AG04449 (cell line): ENCODE measurements at regions of chr10 and their contacts with region 1.

Region 1: DNA sequence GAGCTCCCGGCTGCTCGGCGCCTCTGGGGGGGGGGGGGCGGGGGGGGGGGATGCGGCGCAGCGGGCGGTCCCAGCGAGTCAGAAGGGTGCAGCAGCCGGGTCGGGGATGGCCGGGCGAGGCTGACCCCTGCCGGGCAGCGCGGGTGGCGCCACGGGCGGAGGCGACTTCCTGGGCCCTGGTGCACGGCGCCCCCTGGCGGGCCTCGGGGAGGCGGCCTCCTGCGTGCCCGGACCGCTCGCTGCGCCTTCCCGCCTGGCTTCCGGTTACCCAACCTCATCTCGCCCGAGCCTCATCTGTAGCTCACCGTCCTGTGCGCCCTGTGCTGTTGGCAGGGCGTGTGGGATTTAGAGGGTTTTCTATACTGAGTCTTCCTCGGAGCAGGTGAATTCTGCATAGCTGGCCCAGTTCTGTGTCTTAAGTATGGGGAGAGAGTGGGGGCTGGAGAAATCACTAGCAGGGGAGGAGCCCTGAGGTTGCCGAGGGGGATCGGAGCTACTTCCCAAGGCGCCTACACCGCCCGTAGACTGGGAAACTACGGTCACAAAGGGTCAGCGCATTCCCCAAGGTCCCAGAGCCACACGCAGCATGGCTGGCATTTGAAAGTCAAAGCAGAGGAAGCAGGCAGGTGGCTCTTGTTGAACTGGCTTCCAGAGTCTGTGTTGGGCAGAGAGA is 28.3 kb upstream of the WDFY4 start:
- DNase-seq: no peak
- H3K4me3 ChIP-seq: peak overlapping the region; percentile 62
- CTCF ChIP-seq: peak; percentile 100

Region 2: GRCh38 chr10:48279081-48279751 is 377.2 kb before region 1 on chr10:
- CTCF ChIA-PET with region 1: no interaction called
- POLR2A ChIA-PET with region 1: no interaction called
- DNase-seq: no peak
- H3K4me3 ChIP-seq: no peak overlapping the region
- CTCF ChIP-seq: no peak

Region 3: DNA sequence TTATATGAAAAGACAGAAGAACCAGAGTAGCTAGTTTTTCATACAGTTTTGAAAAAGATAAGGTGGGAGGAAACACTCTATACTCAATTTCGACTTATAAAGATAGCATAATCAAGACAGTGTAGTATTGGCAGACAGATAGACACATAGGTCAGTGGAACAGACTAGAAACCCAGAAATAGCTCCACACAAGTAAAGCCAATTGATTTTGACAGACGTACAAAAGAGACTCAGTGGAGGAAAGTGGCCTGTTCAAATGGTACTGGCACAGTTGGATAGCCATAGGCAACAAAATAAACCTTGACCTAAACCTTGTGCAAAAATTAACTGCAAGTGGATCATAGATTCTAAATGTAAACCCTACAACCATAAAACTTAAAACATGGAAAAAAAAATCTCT is 303.1 kb before region 1 on chr10:
- CTCF ChIA-PET with region 1: interaction called, 20 read pairs
- POLR2A ChIA-PET with region 1: no interaction called
- DNase-seq: no peak
- H3K4me3 ChIP-seq: no peak overlapping the region
- CTCF ChIP-seq: no peak

Region 4: GRCh38 chr10:48444266-48444665 is 212.1 kb before region 1 on chr10:
- CTCF ChIA-PET with region 1: interaction called, 15 read pairs
- POLR2A ChIA-PET with region 1: no interaction called
- DNase-seq: no peak
- H3K4me3 ChIP-seq: no peak overlapping the region
- CTCF ChIP-seq: peak; percentile 26

Region 5: DNA sequence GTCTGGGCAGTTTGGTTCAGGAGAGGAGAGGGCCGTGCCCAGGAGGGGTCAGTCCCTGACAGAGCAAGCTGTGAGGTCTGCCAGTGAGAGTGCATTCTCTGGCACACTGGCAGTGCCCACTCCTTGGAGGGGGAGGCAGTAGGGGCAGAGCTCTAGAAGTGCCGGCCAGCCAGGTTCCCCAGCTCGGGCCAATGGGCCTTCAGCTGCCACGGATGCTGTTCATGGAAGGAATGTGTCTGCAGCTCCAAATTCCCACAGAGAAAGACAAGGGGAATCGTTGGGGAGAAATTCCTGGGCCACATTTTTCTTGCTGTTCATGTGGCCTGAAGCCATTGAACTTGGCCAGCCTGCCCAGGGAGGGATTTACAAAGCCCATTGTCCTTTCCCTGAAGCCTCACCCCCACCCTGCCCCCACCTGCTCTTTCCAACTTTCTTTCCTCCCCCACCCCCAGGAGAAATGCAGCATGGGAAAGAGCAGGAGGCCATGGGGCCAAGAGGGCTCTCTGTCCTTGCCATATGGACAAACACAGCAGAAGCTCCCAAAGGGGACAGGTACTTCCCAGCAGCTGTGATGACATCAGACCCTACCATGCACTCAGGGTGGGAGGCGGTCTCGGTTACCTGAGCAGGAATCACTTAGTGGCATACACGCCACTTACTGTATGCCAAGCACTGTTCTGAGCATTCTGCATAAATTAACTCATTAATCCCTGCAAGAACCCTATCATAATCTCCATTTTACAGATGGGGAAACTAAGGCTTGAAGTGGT is 122.2 kb before region 1 on chr10:
- CTCF ChIA-PET with region 1: interaction called, 1,051 read pairs
- POLR2A ChIA-PET with region 1: interaction called, 4 read pairs
- DNase-seq: no peak
- H3K4me3 ChIP-seq: no peak overlapping the region
- CTCF ChIP-seq: no peak

Region 6: GRCh38 chr10:48598243-48598935 is 58.0 kb before region 1 on chr10:
- CTCF ChIA-PET with region 1: interaction called, 42 read pairs
- POLR2A ChIA-PET with region 1: no interaction called
- DNase-seq: no peak
- H3K4me3 ChIP-seq: no peak overlapping the region
- CTCF ChIP-seq: no peak

Region 7: DNA sequence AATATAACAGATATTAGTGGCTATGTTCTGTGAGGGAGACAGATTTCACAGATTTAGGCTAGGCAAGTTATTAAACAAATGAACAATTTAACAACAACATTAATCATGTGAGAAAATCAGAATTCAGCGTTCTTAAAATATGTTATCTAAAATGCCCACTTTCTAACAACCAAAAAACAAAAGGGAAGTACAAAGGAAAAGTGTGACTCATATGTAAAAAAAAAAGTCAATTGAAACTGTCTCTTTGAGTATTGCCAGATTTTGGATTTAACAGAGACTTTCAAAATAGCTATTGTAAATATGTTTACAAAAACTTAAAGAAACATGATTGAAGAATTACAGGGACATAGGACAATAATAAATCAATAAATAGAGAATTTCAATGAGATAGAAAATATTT is 16.7 kb before region 1 on chr10:
- CTCF ChIA-PET with region 1: interaction called, 132 read pairs
- POLR2A ChIA-PET with region 1: no interaction called
- DNase-seq: no peak
- H3K4me3 ChIP-seq: no peak overlapping the region
- CTCF ChIP-seq: no peak

Region 8: DNA sequence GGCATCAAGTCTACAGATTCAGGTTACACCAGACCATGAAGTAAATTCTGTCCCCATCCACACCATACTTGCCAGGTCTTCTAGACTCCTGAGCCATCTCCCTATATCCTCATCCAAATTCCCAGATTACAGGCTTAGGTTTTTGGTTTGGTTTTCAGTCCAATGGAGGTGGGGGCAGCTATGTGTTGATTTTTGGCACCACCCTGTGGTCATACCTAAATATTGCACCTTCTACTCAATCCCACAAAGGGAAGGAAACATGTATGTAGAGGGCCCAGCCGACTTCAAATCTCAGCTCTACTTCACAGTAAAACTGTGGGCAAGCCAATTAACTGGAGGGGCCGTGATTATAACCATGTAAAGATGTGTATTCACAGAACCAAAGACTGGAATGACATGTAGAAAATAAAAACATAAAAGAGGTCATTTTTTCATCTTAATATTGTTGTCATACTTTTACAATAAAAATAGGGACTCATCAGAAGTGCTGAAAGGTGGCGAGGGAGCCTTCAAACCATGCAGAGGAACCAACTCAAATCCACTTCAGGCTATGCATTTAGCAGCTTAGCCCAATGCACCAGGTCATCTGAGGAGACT is 862.7 kb after region 1 on chr10:
- CTCF ChIA-PET with region 1: interaction called, 111 read pairs
- POLR2A ChIA-PET with region 1: no interaction called
- DNase-seq: no peak
- H3K4me3 ChIP-seq: no peak overlapping the region
- CTCF ChIP-seq: peak; percentile 54